ENCODE measurements at regions of chr1 and their contacts with region 1.

Region 1: GRCh38 chr1:52702886-52703787 is 5.0 kb upstream of the COA7 start:
- DNase-seq: peak; percentile 62 to 89 (median 83)
- ATAC-seq: peak; percentile 95
- H3K4me3 ChIP-seq: peak overlapping the region; percentile 52
- H3K4me3 Mint-ChIP-seq: peak overlapping the region; percentile 75 to 96 (median 92)
- H3K27ac ChIP-seq: peak overlapping the region; percentile 83
- H3K27ac Mint-ChIP-seq: peak overlapping the region; percentile 97 to 99 (median 99)
- H3K4me1 ChIP-seq: peaks cover 6% of the 10 kb centered on the region in 2 donors
- H3K4me1 Mint-ChIP-seq: peaks cover 21 to 46% (median 32%) of the 10 kb centered on the region in 7 donors
- H3K27me3 ChIP-seq: no peaks in the 10 kb centered on the region
- H3K27me3 Mint-ChIP-seq: peaks cover 0 to 12% (median 0%) of the 10 kb centered on the region in 5 donors

Region 2: GRCh38 chr1:52569449-52570210 is 133.5 kb before region 1 on chr1:
- CTCF ChIA-PET with region 1: no interaction called
- POLR2A ChIA-PET with region 1: no interaction called
- intact Hi-C with region 1: no loop called
- DNase-seq: no peak
- ATAC-seq: peak; percentile 29
- H3K4me3 ChIP-seq: no peak overlapping the region
- H3K4me3 Mint-ChIP-seq: peak overlapping the region in 9 of 10 donors; percentile 2 to 65 (median 35)
- H3K27ac ChIP-seq: no peak overlapping the region
- H3K27ac Mint-ChIP-seq: peak overlapping the region in 8 of 9 donors; percentile 26 to 75 (median 59)
- H3K4me1 ChIP-seq: peaks cover 0 to 5% of the 10 kb centered on the region in 2 donors
- H3K4me1 Mint-ChIP-seq: peaks cover 11 to 34% (median 19%) of the 10 kb centered on the region in 7 donors
- H3K27me3 ChIP-seq: no peaks in the 10 kb centered on the region
- H3K27me3 Mint-ChIP-seq: peaks cover 0 to 9% (median 0%) of the 10 kb centered on the region in 5 donors

Region 3: GRCh38 chr1:52726265-52727113 is 23.4 kb after region 1 on chr1 and contains the start of gene ZYG11B:
- CTCF ChIA-PET with region 1: interaction called, 4 read pairs
- POLR2A ChIA-PET with region 1: interaction called, 26 read pairs
- intact Hi-C with region 1: loop called (anchors 1 kb)
- DNase-seq: peak; percentile 80 to 93 (median 88)
- ATAC-seq: peak; percentile 97
- H3K4me3 ChIP-seq: peak within 1 kb of the TSS; percentile 85
- H3K4me3 Mint-ChIP-seq: peak within 1 kb of the TSS; percentile 88 to 99 (median 97)
- H3K27ac ChIP-seq: peak within 1 kb of the TSS; percentile 89
- H3K27ac Mint-ChIP-seq: peak within 1 kb of the TSS; percentile 72 to 97 (median 90)
- H3K4me1 ChIP-seq: peaks cover 12 to 19% of the 10 kb centered on the region in 2 donors
- H3K4me1 Mint-ChIP-seq: peaks cover 24 to 60% (median 54%) of the 10 kb centered on the region in 7 donors
- H3K27me3 ChIP-seq: no peaks in the 10 kb centered on the region
- H3K27me3 Mint-ChIP-seq: peaks cover 0 to 6% (median 0%) of the 10 kb centered on the region in 5 donors
- total RNA-seq, gene ZYG11B: 14.9 to 26.8 (median 17.9) TPM

Region 4: DNA sequence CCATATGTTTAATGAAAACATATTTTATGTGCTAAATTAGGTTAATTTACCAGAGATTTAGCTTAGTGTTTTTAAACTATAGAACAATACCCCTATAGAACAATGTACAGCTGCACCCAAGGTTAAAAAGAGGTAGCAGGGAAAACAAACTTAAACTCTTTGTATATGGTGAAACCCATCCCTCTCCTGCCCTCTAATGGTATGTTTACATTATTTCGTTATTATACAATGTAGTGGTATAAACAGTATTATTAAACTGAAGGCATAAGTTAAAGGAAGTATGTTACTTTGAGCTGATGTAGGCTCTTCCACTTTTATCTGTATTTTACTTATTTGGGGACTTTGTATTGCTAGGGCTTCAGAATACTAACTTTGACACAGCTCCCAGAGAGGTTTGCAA is 122.7 kb after region 1 on chr1:
- CTCF ChIA-PET with region 1: interaction called, 5 read pairs
- POLR2A ChIA-PET with region 1: no interaction called
- intact Hi-C with region 1: loop called (anchors 1 to 5 kb)
- DNase-seq: peak in 1 of 9 donors; percentile 13
- ATAC-seq: peak; percentile 42
- H3K4me3 ChIP-seq: no peak overlapping the region
- H3K4me3 Mint-ChIP-seq: no peak overlapping the region
- H3K27ac ChIP-seq: no peak overlapping the region
- H3K27ac Mint-ChIP-seq: peak overlapping the region in 5 of 9 donors; percentile 12 to 59 (median 32)
- H3K4me1 ChIP-seq: no peaks in the 10 kb centered on the region
- H3K4me1 Mint-ChIP-seq: no peaks in the 10 kb centered on the region
- H3K27me3 ChIP-seq: no peaks in the 10 kb centered on the region
- H3K27me3 Mint-ChIP-seq: no peaks in the 10 kb centered on the region

Region 5: GRCh38 chr1:52920791-52921291 is 217.7 kb after region 1 on chr1:
- CTCF ChIA-PET with region 1: interaction called, 5 read pairs
- POLR2A ChIA-PET with region 1: interaction called, 5 read pairs
- intact Hi-C with region 1: loop called (anchors 1 to 5 kb)
- DNase-seq: no peak
- ATAC-seq: no peak
- H3K4me3 ChIP-seq: peak overlapping the region; percentile 67
- H3K4me3 Mint-ChIP-seq: peak overlapping the region; percentile 65 to 89 (median 84)
- H3K27ac ChIP-seq: peak overlapping the region; percentile 74
- H3K27ac Mint-ChIP-seq: peak overlapping the region; percentile 51 to 86 (median 70)
- H3K4me1 ChIP-seq: peaks cover 0 to 12% of the 10 kb centered on the region in 2 donors
- H3K4me1 Mint-ChIP-seq: peaks cover 16 to 41% (median 31%) of the 10 kb centered on the region in 7 donors
- H3K27me3 ChIP-seq: no peaks in the 10 kb centered on the region
- H3K27me3 Mint-ChIP-seq: peaks cover 0 to 4% (median 0%) of the 10 kb centered on the region in 5 donors

Region 6: DNA sequence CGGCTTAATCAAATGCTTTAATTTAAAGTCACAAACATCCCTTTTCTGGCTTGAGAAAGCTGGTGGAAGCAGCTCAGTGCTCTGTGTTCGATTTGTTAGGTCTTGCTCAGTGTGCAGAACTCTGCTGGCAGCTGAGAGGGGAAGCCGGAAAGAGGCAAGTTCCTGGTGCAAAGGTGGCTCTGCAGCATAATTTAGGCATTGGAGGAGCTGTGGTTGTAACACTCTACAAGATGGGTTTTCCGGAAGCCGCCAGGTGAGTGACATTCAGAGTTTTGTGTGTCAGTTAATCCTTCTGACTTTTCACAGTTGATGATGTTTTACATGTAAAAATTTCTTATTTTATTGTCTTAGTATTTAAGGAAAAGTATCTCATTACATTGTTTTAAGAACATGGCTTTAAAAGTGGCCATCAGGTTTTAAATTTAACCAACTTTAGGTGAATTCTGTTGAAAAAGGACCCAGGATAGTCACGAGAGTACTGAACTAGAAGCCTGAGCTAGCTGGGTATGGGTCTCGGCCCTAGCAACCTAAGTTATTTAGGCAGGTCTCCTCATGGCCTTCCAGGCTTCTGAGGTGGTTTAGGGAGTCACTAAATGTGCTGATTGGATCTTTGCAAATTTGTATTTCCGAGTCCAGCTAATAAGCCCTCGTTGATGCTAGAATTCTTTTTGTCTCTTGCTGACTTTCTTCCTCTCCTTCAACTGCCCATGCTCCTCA is 311.8 kb after region 1 on chr1:
- CTCF ChIA-PET with region 1: no interaction called
- POLR2A ChIA-PET with region 1: no interaction called
- intact Hi-C with region 1: loop called in 1 of 2 experiments (anchors 1 kb)
- DNase-seq: peak; percentile 27 to 91 (median 84)
- ATAC-seq: peak; percentile 100
- H3K4me3 ChIP-seq: peak overlapping the region; percentile 65
- H3K4me3 Mint-ChIP-seq: peak overlapping the region; percentile 81 to 96 (median 90)
- H3K27ac ChIP-seq: peak overlapping the region; percentile 57
- H3K27ac Mint-ChIP-seq: peak overlapping the region; percentile 57 to 92 (median 84)
- H3K4me1 ChIP-seq: peaks cover 14 to 16% of the 10 kb centered on the region in 2 donors
- H3K4me1 Mint-ChIP-seq: peaks cover 20 to 48% (median 40%) of the 10 kb centered on the region in 7 donors
- H3K27me3 ChIP-seq: no peaks in the 10 kb centered on the region
- H3K27me3 Mint-ChIP-seq: no peaks in the 10 kb centered on the region

Measured in naive thymus-derived CD4-positive, alpha-beta T cell (primary cell).